MCF 10A (cell line): ENCODE measurements at regions of chr11 and their contacts with region 1.

Region 1: DNA sequence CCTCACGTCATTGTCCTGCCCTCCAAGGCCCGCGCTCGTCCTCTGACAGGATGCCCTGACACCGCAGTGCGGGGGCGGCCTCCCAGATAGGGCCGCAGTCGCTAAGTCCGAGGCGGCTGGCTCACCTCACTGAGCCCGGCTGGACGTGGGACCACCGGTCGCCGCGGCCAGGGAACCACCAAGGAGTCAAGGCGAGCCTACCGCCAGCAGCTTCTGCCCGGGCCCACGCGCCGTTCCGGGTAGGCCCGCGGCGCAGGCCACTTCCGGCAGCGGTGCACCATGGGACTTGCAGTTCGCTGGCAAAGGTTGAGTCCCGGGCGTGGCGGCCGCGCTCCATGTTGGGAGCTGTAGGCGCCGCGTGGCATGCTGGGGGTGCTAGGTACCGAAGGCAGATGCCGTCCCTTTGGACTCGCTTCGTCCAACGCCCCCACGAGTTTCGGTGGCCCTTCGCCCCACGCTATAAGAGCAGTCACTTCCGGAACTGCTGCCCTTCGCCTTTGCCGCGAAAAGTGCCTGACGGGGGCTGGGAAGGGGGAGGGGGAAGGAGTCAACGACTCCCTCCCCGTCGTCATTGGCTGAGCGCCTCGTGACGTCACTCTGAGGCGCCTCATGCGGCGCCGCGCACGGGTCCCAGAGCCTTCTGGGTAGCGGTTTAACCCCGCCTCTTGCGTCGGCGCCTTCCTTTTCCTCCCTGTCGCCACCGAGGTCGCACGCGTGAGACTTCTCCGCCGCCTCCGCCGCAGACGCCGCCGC is at the start of gene RPLP2:
- DNase-seq: peak; percentile 97
- H3K4me3 Mint-ChIP-seq: peak within 1 kb of the TSS; percentile 95
- H3K27ac Mint-ChIP-seq: peak within 1 kb of the TSS; percentile 97
- H3K4me1 Mint-ChIP-seq: peaks cover 12% of the 10 kb centered on the region
- H3K27me3 Mint-ChIP-seq: no peaks in the 10 kb centered on the region
- CTCF ChIP-seq: no peak
- total RNA-seq, gene RPLP2: 1,886 and 2,142 TPM in 2 replicates

Region 2: GRCh38 chr11:196786-197719 is 612.4 kb before region 1 on chr11:
- CTCF ChIA-PET with region 1: no interaction called
- POLR2A ChIA-PET with region 1: no interaction called
- intact Hi-C with region 1: no loop called
- DNase-seq: no peak
- H3K4me3 Mint-ChIP-seq: no peak overlapping the region
- H3K27ac Mint-ChIP-seq: no peak overlapping the region
- H3K4me1 Mint-ChIP-seq: no peaks in the 10 kb centered on the region
- H3K27me3 Mint-ChIP-seq: no peaks in the 10 kb centered on the region
- CTCF ChIP-seq: no peak

Region 3: GRCh38 chr11:695538-696248 is 113.8 kb before region 1 on chr11 and contains the start of gene TMEM80:
- CTCF ChIA-PET with region 1: interaction called, 4 read pairs
- POLR2A ChIA-PET with region 1: interaction called, 15 read pairs
- intact Hi-C with region 1: no loop called
- DNase-seq: peak; percentile 99
- H3K4me3 Mint-ChIP-seq: peak within 1 kb of the TSS; percentile 81
- H3K27ac Mint-ChIP-seq: peak within 1 kb of the TSS; percentile 98
- H3K4me1 Mint-ChIP-seq: peaks cover 33% of the 10 kb centered on the region
- H3K27me3 Mint-ChIP-seq: no peaks in the 10 kb centered on the region
- CTCF ChIP-seq: no peak
- total RNA-seq, gene TMEM80: 12.2 and 12.8 TPM in 2 replicates

Region 4: DNA sequence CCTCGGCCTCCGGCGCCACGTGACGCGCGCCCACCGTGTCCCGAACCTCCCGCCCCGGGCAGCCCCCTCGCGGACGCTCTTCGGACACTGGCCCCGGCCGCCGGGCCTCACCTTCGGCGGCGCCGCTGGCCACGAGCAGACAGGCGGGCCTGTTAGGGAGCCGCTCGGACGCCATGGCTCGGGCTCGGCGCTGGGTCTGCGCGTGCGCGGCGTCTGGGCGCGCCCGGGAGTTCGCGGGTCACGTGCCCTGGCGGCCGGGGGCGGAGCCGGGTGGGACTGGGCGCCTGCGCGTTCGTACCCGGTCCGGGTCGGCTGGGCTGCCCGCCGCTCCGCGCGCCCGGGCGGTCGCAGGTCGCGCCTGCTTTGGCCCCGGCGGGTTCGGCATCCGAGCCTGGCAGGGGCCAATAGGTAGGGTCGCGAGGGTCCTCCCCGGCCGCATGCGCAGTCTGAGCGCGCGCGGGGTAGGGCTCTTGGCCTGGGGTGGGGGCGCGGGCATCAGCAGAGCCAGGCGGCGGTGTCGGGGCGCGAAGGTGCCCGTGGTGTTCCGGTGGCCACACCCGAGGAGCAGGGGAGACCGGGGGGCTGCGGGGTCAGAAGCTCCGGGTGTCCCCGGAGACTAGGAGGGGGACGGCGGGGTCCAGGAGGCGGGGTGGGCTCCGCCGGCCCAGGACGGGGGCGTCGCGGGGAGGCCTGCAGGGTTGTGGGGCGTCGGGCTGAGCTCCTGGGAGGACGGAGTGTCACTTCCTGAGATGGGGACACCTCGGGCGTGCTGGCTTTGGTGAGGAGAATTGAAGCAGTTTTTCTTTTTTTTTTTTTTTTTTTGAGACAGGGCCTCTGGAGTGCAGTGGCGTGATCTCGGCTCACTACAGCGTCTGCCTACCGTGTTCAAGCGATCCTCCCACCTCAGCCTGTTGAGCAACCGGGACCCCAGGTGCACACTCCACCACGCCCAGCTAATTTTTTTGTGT is 31.9 kb before region 1 on chr11 and contains the start of gene GATD1:
- CTCF ChIA-PET with region 1: interaction called, 3 read pairs
- POLR2A ChIA-PET with region 1: interaction called, 13 read pairs
- intact Hi-C with region 1: no loop called
- DNase-seq: peak; percentile 84
- H3K4me3 Mint-ChIP-seq: peak within 1 kb of the TSS; percentile 85
- H3K27ac Mint-ChIP-seq: peak within 1 kb of the TSS; percentile 81
- H3K4me1 Mint-ChIP-seq: peaks cover 11% of the 10 kb centered on the region
- H3K27me3 Mint-ChIP-seq: no peaks in the 10 kb centered on the region
- CTCF ChIP-seq: no peak
- total RNA-seq, gene GATD1: 54.6 and 67.7 TPM in 2 replicates

Region 5: DNA sequence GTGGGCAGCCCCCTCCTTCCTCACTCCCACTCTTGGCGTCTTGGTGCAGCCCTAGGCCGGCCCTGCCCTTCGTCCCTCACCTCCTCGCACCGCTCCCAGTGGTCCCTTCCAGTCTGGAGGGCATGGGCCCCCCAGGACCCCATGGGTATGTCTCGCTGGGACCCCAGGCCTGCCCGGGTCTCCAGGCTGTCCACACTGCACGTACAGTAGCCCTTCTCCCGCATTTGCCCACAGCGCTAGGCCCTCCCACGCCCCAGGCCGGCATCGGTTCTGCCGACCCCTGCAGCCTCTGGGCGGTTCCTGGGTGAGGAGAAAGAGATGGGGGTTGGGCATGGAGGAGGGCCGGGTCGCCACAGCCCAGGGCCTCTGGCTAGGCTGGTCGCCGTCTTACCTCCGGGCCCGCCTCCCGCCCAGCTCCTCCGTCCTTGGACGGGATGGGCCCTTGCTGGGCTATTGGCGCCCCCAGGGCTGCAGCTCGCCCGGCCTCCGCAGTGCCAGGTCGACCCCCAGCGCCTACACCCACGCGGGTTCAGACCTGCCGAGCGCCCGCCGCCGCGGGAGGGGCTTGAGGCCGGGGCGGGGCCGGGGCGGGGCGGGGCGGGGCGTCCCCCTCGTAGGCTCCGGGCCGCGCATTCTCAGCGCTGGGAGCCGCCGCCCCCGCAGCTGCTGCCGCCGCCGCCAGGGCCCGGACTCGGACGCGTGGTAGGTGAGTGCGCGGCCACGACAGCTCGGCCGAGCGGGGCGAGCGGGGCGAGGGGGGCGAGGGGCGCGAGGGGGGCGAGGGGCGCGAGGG is 23.1 kb after region 1 on chr11 and contains the start of gene CD151:
- CTCF ChIA-PET with region 1: no interaction called
- POLR2A ChIA-PET with region 1: interaction called, 274 read pairs
- intact Hi-C with region 1: no loop called
- DNase-seq: peak; percentile 68
- H3K4me3 Mint-ChIP-seq: peak within 1 kb of the TSS; percentile 81
- H3K27ac Mint-ChIP-seq: peak within 1 kb of the TSS; percentile 94
- H3K4me1 Mint-ChIP-seq: peaks cover 17% of the 10 kb centered on the region
- H3K27me3 Mint-ChIP-seq: no peaks in the 10 kb centered on the region
- CTCF ChIP-seq: no peak
- total RNA-seq, gene CD151: 404 and 412 TPM in 2 replicates

Region 6: GRCh38 chr11:842370-843002 is 33.0 kb after region 1 on chr11 and contains the starts of genes POLR2L and TSPAN4:
- CTCF ChIA-PET with region 1: interaction called, 4 read pairs
- POLR2A ChIA-PET with region 1: interaction called, 274 read pairs
- intact Hi-C with region 1: loop called (anchors 5 kb)
- DNase-seq: peak; percentile 87
- H3K4me3 Mint-ChIP-seq: peak within 1 kb of the TSS; percentile 87
- H3K27ac Mint-ChIP-seq: peak within 1 kb of the TSS; percentile 90
- H3K4me1 Mint-ChIP-seq: peaks cover 31% of the 10 kb centered on the region
- H3K27me3 Mint-ChIP-seq: no peaks in the 10 kb centered on the region
- CTCF ChIP-seq: no peak
- total RNA-seq, gene POLR2L: 96.9 and 118 TPM in 2 replicates
- total RNA-seq, gene TSPAN4: 118 and 148 TPM in 2 replicates

Region 7: DNA sequence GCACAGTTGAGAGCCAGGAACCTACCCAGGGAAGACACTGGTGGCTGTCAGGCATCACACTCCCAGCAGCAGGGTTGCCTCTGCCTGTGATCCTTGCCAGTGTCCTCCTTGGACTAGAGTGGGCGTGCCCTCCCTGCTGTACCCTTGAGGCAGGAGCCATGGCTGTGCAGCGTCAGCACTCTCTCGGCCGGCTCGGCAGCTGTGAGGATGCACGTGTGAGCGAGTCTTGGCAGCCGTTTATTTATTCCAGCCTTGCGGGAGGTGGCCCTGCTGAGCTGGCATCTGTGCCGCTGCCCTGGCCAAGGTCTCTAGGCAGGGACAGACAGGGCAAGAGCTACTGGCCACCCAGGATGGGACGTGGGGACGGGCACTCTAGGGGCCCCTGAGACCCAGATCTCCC is 67.1 kb after region 1 on chr11:
- CTCF ChIA-PET with region 1: no interaction called
- POLR2A ChIA-PET with region 1: no interaction called
- intact Hi-C with region 1: no loop called
- DNase-seq: no peak
- H3K4me3 Mint-ChIP-seq: no peak overlapping the region
- H3K27ac Mint-ChIP-seq: no peak overlapping the region
- H3K4me1 Mint-ChIP-seq: no peaks in the 10 kb centered on the region
- H3K27me3 Mint-ChIP-seq: no peaks in the 10 kb centered on the region
- CTCF ChIP-seq: no peak

Region 8: GRCh38 chr11:1207401-1208143 is 398.1 kb after region 1 on chr11:
- CTCF ChIA-PET with region 1: no interaction called
- POLR2A ChIA-PET with region 1: no interaction called
- intact Hi-C with region 1: no loop called
- DNase-seq: no peak
- H3K4me3 Mint-ChIP-seq: no peak overlapping the region
- H3K27ac Mint-ChIP-seq: no peak overlapping the region
- H3K4me1 Mint-ChIP-seq: no peaks in the 10 kb centered on the region
- H3K27me3 Mint-ChIP-seq: peaks cover 20% of the 10 kb centered on the region
- CTCF ChIP-seq: no peak